HCT116 (cell line): ENCODE measurements at regions of chr3 and their contacts with region 1.

Region 1: GRCh38 chr3:177359593-177360357 is 162.5 kb upstream of the TBL1XR1 start:
- DNase-seq: peak; percentile 98
- ATAC-seq: peak; percentile 62
- H3K4me3 ChIP-seq: peak overlapping the region; percentile 17 to 50
- H3K27ac ChIP-seq: peak overlapping the region; percentile 97
- H3K4me1 ChIP-seq: peaks cover 56 to 74% of the 10 kb centered on the region in 2 experiments
- H3K27me3 ChIP-seq: no peaks in the 10 kb centered on the region
- CTCF ChIP-seq: no peak
- POLR2A ChIP-seq: no peak
- RAD21 ChIP-seq: no peak

Region 2: DNA sequence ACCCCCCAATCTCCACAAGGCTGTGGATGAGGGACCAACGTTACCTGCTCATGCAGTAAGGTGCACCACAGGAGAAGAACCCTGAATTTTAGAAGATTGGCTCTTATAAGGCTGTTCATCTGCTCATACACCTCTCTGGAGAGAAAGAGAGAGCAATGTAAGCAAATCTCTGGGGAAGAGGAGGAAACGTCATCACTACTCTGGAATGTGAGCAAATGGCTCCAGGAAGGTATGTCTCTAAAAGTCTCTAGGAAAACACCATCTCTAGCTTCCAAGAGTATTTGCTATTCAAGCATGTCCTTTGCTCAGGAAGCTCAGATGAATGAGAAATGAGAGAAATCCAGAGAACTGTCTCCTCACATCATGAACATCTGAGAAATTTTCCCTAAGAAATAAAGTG is 397.9 kb before region 1 on chr3:
- CTCF ChIA-PET with region 1: no interaction called
- POLR2A ChIA-PET with region 1: no interaction called
- RAD21 ChIA-PET with region 1: no interaction called
- intact Hi-C with region 1: no loop called
- DNase-seq: no peak
- ATAC-seq: no peak
- H3K4me3 ChIP-seq: no peak overlapping the region
- H3K27ac ChIP-seq: no peak overlapping the region
- H3K4me1 ChIP-seq: no peaks in the 10 kb centered on the region
- H3K27me3 ChIP-seq: no peaks in the 10 kb centered on the region
- CTCF ChIP-seq: no peak
- POLR2A ChIP-seq: no peak
- RAD21 ChIP-seq: no peak

Region 3: GRCh38 chr3:177050501-177051237 is 309.1 kb before region 1 on chr3:
- CTCF ChIA-PET with region 1: interaction called, 4 read pairs
- POLR2A ChIA-PET with region 1: interaction called, 5 read pairs
- RAD21 ChIA-PET with region 1: interaction called in 1 of 2 experiments, 3 read pairs
- intact Hi-C with region 1: loop called (anchors 2 kb)
- DNase-seq: peak; percentile 19
- ATAC-seq: peak; percentile 80
- H3K4me3 ChIP-seq: no peak overlapping the region
- H3K27ac ChIP-seq: no peak overlapping the region; the same call in 1 of the 2 replicates
- H3K4me1 ChIP-seq: no peaks in the 10 kb centered on the region
- H3K27me3 ChIP-seq: no peaks in the 10 kb centered on the region
- CTCF ChIP-seq: peak; percentile 25 to 63 (median 39); a peak in 3 of 6 replicates
- POLR2A ChIP-seq: no peak
- RAD21 ChIP-seq: peak; percentile 78

Region 4: GRCh38 chr3:177284383-177284881 is 75.3 kb before region 1 on chr3:
- CTCF ChIA-PET with region 1: no interaction called
- POLR2A ChIA-PET with region 1: interaction called, 6 read pairs
- RAD21 ChIA-PET with region 1: no interaction called
- intact Hi-C with region 1: loop called (anchors 2 kb)
- DNase-seq: peak; percentile 71
- ATAC-seq: peak; percentile 86
- H3K4me3 ChIP-seq: peak overlapping the region in 1 of 2 experiments; percentile 0; a peak in 1 of 4 replicates
- H3K27ac ChIP-seq: peak overlapping the region; percentile 42
- H3K4me1 ChIP-seq: peaks cover 37 to 41% of the 10 kb centered on the region in 2 experiments
- H3K27me3 ChIP-seq: no peaks in the 10 kb centered on the region
- CTCF ChIP-seq: peak in 1 of 3 experiments; percentile 37; a peak in 2 of 6 replicates
- POLR2A ChIP-seq: no peak
- RAD21 ChIP-seq: no peak

Region 5: DNA sequence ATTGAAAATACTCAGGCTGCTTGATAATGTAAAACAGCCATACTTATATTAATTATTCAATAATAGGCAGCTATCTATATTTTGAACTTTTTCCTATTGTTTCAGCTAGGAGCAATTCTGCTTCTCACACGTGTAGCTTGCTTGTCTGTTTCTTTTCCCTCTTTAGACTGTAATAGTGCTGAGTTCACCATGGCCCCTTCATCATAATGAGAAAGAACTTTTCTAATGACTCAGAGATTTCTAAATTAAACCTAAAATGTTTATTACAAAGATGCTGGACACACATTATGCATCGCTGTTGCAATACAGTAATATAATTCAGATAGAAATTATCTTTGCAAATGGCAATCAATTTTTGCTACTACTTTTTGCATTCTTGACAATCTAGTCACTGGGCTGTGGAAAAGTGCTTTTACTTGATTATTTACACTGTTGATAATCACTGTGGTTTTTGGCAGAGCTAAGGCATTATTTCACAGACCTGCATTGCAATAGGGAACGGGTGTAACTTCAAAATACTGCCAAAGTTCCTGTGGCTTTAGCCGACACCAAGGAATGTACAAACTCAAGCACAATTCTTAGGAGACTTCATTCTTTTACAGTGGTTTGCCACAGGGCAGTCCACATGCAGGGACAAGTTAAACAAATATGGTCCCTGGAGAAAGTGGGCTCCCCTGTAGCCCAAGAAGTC is 118.5 kb after region 1 on chr3:
- CTCF ChIA-PET with region 1: no interaction called
- POLR2A ChIA-PET with region 1: no interaction called
- RAD21 ChIA-PET with region 1: no interaction called
- intact Hi-C with region 1: loop called (anchors 2 kb)
- DNase-seq: peak; percentile 56
- ATAC-seq: peak; percentile 81
- H3K4me3 ChIP-seq: peak overlapping the region in 1 of 2 experiments; percentile 15; a peak in 1 of 4 replicates
- H3K27ac ChIP-seq: peak overlapping the region; percentile 53; the same call in 1 of the 2 replicates
- H3K4me1 ChIP-seq: peaks cover 21% of the 10 kb centered on the region in 2 experiments
- H3K27me3 ChIP-seq: no peaks in the 10 kb centered on the region
- CTCF ChIP-seq: no peak
- POLR2A ChIP-seq: no peak
- RAD21 ChIP-seq: peak; percentile 29; the same call in 1 of the 2 replicates

Region 6: DNA sequence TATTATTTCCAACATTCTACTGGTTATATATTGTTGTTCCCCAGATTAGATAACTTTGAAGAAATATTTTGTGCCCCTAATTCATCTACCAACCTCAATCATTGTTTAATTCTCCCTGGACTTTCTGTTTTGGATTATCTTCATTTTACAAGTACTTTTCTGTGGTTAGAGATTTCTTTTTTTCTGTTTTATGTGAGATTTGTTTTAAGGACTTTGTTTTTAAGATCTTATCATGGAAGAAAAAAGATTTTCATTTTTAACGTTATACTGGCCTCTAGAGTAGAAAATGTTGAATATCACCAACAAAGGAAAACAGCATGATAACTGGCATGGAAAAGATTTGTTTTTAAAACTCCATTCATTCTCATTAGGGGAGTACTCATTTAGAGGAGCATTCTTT is 965.6 kb after region 1 on chr3:
- CTCF ChIA-PET with region 1: no interaction called
- POLR2A ChIA-PET with region 1: no interaction called
- RAD21 ChIA-PET with region 1: no interaction called
- intact Hi-C with region 1: loop called (anchors 5 kb)
- DNase-seq: no peak
- ATAC-seq: no peak
- H3K4me3 ChIP-seq: no peak overlapping the region
- H3K27ac ChIP-seq: no peak overlapping the region
- H3K4me1 ChIP-seq: no peaks in the 10 kb centered on the region
- H3K27me3 ChIP-seq: no peaks in the 10 kb centered on the region
- CTCF ChIP-seq: peak in 2 of 3 experiments; percentile 14 to 51; a peak in 3 of 6 replicates
- POLR2A ChIP-seq: no peak
- RAD21 ChIP-seq: peak; percentile 62